ENCODE measurements at regions of chr17 and their contacts with region 1.

Region 1: DNA sequence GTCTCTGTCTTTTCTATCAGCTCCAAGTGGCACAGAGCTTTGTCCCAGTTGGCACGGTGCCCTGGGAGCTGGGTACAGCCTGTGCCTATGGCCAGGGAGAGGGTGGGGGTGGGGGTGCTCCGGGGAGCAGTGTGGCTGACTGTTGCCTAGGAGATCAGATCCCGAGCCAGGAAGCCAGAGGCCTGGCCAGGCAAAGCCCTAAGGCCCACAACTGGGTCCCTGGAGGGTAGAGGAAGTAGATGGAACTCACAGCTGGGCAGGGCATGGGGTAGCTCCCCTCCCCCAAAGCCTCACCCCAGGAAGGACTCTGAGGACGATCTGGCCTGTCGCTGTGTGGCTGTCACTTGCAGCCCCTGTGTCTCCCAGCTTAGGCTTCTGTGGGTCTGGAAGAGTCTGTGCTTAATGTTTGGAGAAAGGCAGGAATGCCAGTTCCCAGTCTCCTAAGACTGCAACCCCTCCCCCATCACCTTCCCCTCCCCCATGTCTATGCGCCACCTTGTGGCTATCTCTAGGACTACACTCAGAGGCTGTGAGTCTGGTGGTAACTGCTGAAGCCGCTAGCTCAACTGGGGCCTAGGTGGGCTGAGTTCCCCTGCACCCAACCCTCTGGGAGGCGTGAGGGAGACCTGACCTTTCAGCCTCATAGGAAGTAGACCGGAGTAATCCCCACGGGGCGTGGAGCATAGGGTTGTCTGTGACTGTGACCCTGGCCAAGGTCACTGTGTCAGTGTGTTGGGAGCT is 12.6 kb downstream of the THRA start:
- DNase-seq: peak; percentile 98
- H3K4me3 Mint-ChIP-seq: peak overlapping the region; percentile 14
- H3K27ac Mint-ChIP-seq: peak overlapping the region; percentile 6
- H3K4me1 Mint-ChIP-seq: peaks cover 70% of the 10 kb centered on the region
- H3K27me3 Mint-ChIP-seq: no peaks in the 10 kb centered on the region
- CTCF ChIP-seq: no peak

Region 2: GRCh38 chr17:39335704-39336223 is 739.6 kb before region 1 on chr17:
- CTCF ChIA-PET with region 1: no interaction called
- intact Hi-C with region 1: no loop called
- DNase-seq: no peak
- H3K4me3 Mint-ChIP-seq: no peak overlapping the region
- H3K27ac Mint-ChIP-seq: no peak overlapping the region
- H3K4me1 Mint-ChIP-seq: no peaks in the 10 kb centered on the region
- H3K27me3 Mint-ChIP-seq: no peaks in the 10 kb centered on the region
- CTCF ChIP-seq: no peak

Region 3: DNA sequence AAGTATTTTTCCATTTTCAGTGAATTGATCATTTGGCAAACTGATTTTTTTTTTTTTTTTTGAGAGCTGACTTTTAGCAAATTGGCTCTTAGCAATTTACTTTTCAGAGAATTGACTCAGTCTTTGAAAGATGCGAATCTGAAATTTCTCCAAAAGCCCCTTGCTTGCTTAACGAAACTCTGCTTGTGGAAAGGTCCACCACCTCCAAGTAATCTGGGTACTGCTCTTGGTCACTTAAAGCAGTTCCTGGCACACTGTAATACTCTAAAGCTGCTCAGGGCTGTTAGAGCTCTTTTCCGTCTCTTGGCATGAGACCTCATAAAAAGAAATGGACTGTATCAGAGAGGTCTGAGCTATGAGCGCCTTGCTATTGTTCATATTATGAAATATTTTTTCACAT is 159.8 kb before region 1 on chr17:
- CTCF ChIA-PET with region 1: no interaction called
- intact Hi-C with region 1: no loop called
- DNase-seq: peak; percentile 62
- H3K4me3 Mint-ChIP-seq: no peak overlapping the region
- H3K27ac Mint-ChIP-seq: no peak overlapping the region
- H3K4me1 Mint-ChIP-seq: peaks cover 24% of the 10 kb centered on the region
- H3K27me3 Mint-ChIP-seq: no peaks in the 10 kb centered on the region
- CTCF ChIP-seq: no peak

Region 4: GRCh38 chr17:40026816-40027613 is 48.4 kb before region 1 on chr17:
- CTCF ChIA-PET with region 1: interaction called, 57 read pairs
- intact Hi-C with region 1: no loop called
- DNase-seq: peak; percentile 100
- H3K4me3 Mint-ChIP-seq: no peak overlapping the region
- H3K27ac Mint-ChIP-seq: no peak overlapping the region
- H3K4me1 Mint-ChIP-seq: peaks cover 30% of the 10 kb centered on the region
- H3K27me3 Mint-ChIP-seq: no peaks in the 10 kb centered on the region
- CTCF ChIP-seq: no peak

Region 5: GRCh38 chr17:40062329-40063186 is 12.8 kb before region 1 on chr17 and contains the start of gene THRA:
- CTCF ChIA-PET with region 1: interaction called, 934 read pairs
- intact Hi-C with region 1: loop called (anchors 1 kb)
- DNase-seq: peak; percentile 100
- H3K4me3 Mint-ChIP-seq: peak within 1 kb of the TSS; percentile 54
- H3K27ac Mint-ChIP-seq: peak within 1 kb of the TSS; percentile 27
- H3K4me1 Mint-ChIP-seq: peaks cover 55% of the 10 kb centered on the region
- H3K27me3 Mint-ChIP-seq: peaks cover 52% of the 10 kb centered on the region
- CTCF ChIP-seq: no peak
- total RNA-seq, gene THRA: 107 and 133 TPM in 2 replicates

Region 6: DNA sequence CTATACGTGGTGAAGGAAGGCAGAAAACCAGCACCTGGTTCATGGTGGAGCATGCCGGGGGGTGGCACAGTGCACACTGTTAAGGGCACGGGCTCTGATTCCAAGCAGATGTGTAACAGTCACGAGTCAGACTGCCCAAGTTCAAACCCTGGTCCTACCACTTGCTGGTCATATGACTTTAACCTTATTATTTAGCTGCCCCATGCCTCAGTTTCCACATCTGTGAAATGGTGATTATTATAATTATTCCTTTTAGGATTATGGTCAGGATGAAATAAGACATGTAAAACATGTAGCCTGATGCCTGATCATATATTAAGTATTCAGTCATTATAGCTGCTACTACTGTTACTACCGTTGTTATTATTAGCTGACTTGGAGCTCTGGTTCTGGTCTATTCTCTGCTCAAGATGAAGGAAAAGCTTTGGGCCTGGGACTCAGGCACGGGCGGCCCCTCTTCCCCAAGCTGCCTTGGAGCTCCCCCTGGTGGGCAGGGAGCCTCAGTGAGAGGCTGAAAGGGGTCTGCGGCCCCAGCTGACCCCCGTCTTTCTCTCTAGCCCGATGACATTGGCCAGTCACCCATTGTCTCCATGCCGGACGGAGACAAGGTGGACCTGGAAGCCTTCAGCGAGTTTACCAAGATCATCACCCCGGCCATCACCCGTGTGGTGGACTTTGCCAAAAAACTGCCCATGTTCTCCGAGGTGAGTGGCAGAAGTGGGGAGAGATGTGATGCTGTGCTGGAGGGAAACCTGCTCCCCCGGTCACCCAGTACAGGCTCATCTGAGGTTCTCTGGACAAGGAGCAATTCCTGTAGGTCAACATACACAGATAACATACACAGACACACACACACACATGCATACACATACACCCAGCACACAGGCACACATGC is 11.0 kb after region 1 on chr17:
- CTCF ChIA-PET with region 1: interaction called, 1,006 read pairs
- intact Hi-C with region 1: loop called (anchors 1 kb)
- DNase-seq: peak; percentile 100
- H3K4me3 Mint-ChIP-seq: no peak overlapping the region
- H3K27ac Mint-ChIP-seq: no peak overlapping the region
- H3K4me1 Mint-ChIP-seq: no peaks in the 10 kb centered on the region
- H3K27me3 Mint-ChIP-seq: no peaks in the 10 kb centered on the region
- CTCF ChIP-seq: no peak

Region 7: GRCh38 chr17:40121181-40122135 is 46.1 kb after region 1 on chr17 and contains the start of gene MSL1:
- CTCF ChIA-PET with region 1: interaction called, 670 read pairs
- intact Hi-C with region 1: no loop called
- DNase-seq: peak; percentile 100
- H3K4me3 Mint-ChIP-seq: peak within 1 kb of the TSS; percentile 86
- H3K27ac Mint-ChIP-seq: peak within 1 kb of the TSS; percentile 53
- H3K4me1 Mint-ChIP-seq: peaks cover 48% of the 10 kb centered on the region
- H3K27me3 Mint-ChIP-seq: no peaks in the 10 kb centered on the region
- CTCF ChIP-seq: no peak
- total RNA-seq, gene MSL1: 505 and 524 TPM in 2 replicates

Region 8: GRCh38 chr17:40177275-40177874 is 102.0 kb after region 1 on chr17 and contains the start of gene RAPGEFL1:
- CTCF ChIA-PET with region 1: interaction called, 13 read pairs
- intact Hi-C with region 1: no loop called
- DNase-seq: peak; percentile 100
- H3K4me3 Mint-ChIP-seq: peak within 1 kb of the TSS; percentile 76
- H3K27ac Mint-ChIP-seq: peak within 1 kb of the TSS; percentile 61
- H3K4me1 Mint-ChIP-seq: peaks cover 51% of the 10 kb centered on the region
- H3K27me3 Mint-ChIP-seq: no peaks in the 10 kb centered on the region
- CTCF ChIP-seq: no peak
- total RNA-seq, gene RAPGEFL1: 57.9 and 86.3 TPM in 2 replicates

Region 9: GRCh38 chr17:40410082-40410481 is 334.7 kb after region 1 on chr17:
- CTCF ChIA-PET with region 1: interaction called, 10 read pairs
- intact Hi-C with region 1: no loop called
- DNase-seq: no peak
- H3K4me3 Mint-ChIP-seq: no peak overlapping the region
- H3K27ac Mint-ChIP-seq: peak overlapping the region; percentile 11
- H3K4me1 Mint-ChIP-seq: peaks cover 24% of the 10 kb centered on the region
- H3K27me3 Mint-ChIP-seq: no peaks in the 10 kb centered on the region
- CTCF ChIP-seq: no peak